ENCODE measurements at regions of chr2 and their contacts with region 1.

Region 1: DNA sequence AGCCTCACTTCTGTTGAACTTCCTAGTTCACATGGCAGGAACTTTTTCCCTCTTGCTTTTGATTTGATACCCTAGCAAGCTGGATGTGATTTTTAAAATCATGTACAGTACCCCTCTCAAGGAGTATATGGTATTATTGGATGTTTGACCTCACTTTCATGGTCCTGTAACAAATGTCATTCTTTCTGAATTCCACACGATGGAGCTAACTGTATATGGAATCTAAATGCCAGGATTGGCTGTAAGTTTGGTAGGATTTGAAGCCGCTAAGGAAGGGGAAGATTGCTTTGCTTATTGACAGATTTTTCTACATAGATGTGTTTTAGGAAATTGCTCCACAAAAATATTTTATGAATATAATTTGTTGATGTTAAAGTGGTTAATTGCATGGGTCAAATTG is 18.3 kb downstream of the MAIP1 start:
- DNase-seq: no peak
- H3K4me3 ChIP-seq: no peak overlapping the region
- CTCF ChIP-seq: peak; percentile 52

Region 2: GRCh38 chr2:200483729-200484198 is 510.1 kb after region 1 on chr2:
- in situ Hi-C with region 1: loop called (anchors 5 kb)
- DNase-seq: no peak
- H3K4me3 ChIP-seq: no peak overlapping the region
- CTCF ChIP-seq: peak; percentile 49